Heart right ventricle (tissue), 16 donors: ENCODE measurements at regions of chr19 and their contacts with region 1.

Region 1: GRCh38 chr19:41993612-41994483 is at the start of gene ATP1A3:
- DNase-seq: peak; percentile 66 to 74
- ATAC-seq: peak; percentile 56 to 79 (median 66)
- H3K4me3 ChIP-seq: peak within 1 kb of the TSS; percentile 48 to 78 (median 66)
- H3K27ac ChIP-seq: peak within 1 kb of the TSS; percentile 49 to 98 (median 90)
- H3K4me1 ChIP-seq: peaks cover 0 to 37% (median 19%) of the 10 kb centered on the region in 9 donors
- H3K27me3 ChIP-seq: peaks cover 3 to 70% (median 65%) of the 10 kb centered on the region in 7 donors
- CTCF ChIP-seq: no peak
- total RNA-seq, gene ATP1A3: 245 to 419 (median 347) TPM

Region 2: GRCh38 chr19:41951686-41952172 is 42.1 kb before region 1 on chr19:
- intact Hi-C with region 1: no loop called
- DNase-seq: peak; percentile 71 to 82
- ATAC-seq: peak; percentile 58 to 82 (median 72)
- H3K4me3 ChIP-seq: no peak overlapping the region
- H3K27ac ChIP-seq: no peak overlapping the region
- H3K4me1 ChIP-seq: peaks cover 0 to 14% (median 3%) of the 10 kb centered on the region in 9 donors
- H3K27me3 ChIP-seq: no peaks in the 10 kb centered on the region
- CTCF ChIP-seq: peak; percentile 93 to 100 (median 98)

Region 3: GRCh38 chr19:42010245-42011126 is 16.6 kb after region 1 on chr19:
- intact Hi-C with region 1: no loop called
- DNase-seq: no peak
- ATAC-seq: no peak
- H3K4me3 ChIP-seq: no peak overlapping the region
- H3K27ac ChIP-seq: no peak overlapping the region
- H3K4me1 ChIP-seq: no peaks in the 10 kb centered on the region
- H3K27me3 ChIP-seq: no peaks in the 10 kb centered on the region
- CTCF ChIP-seq: no peak

Region 4: GRCh38 chr19:42032431-42032830 is 38.6 kb after region 1 on chr19:
- intact Hi-C with region 1: loop called in 6 of 10 experiments (anchors 2 to 5 kb)
- DNase-seq: no peak
- ATAC-seq: no peak
- H3K4me3 ChIP-seq: no peak overlapping the region
- H3K27ac ChIP-seq: no peak overlapping the region
- H3K4me1 ChIP-seq: peaks cover 0 to 11% (median 4%) of the 10 kb centered on the region in 9 donors
- H3K27me3 ChIP-seq: no peaks in the 10 kb centered on the region
- CTCF ChIP-seq: no peak

Region 5: GRCh38 chr19:42038666-42039065 is 44.8 kb after region 1 on chr19:
- intact Hi-C with region 1: loop called in 6 of 10 experiments (anchors 2 to 5 kb)
- DNase-seq: peak; percentile 59 to 81
- ATAC-seq: peak; percentile 86 to 96 (median 92)
- H3K4me3 ChIP-seq: no peak overlapping the region
- H3K27ac ChIP-seq: peak overlapping the region in 9 of 10 donors; percentile 22 to 90 (median 73)
- H3K4me1 ChIP-seq: peaks cover 3 to 31% (median 14%) of the 10 kb centered on the region in 9 donors
- H3K27me3 ChIP-seq: no peaks in the 10 kb centered on the region
- CTCF ChIP-seq: no peak

Region 6: GRCh38 chr19:42075616-42076379 is 82.0 kb after region 1 on chr19 and contains the start of gene ZNF574:
- intact Hi-C with region 1: loop called in 2 of 10 experiments (anchors 10 kb)
- DNase-seq: peak; percentile 97 to 99
- ATAC-seq: peak; percentile 96 to 100 (median 98)
- H3K4me3 ChIP-seq: peak within 1 kb of the TSS; percentile 73 to 97 (median 84)
- H3K27ac ChIP-seq: peak within 1 kb of the TSS; percentile 87 to 98 (median 94)
- H3K4me1 ChIP-seq: peaks cover 5 to 27% (median 23%) of the 10 kb centered on the region in 9 donors
- H3K27me3 ChIP-seq: no peaks in the 10 kb centered on the region
- CTCF ChIP-seq: no peak
- total RNA-seq, gene ZNF574: 5.0 to 11.1 (median 8.1) TPM